BJ (cell line): ENCODE measurements at regions of chr6 and their contacts with region 1.

Region 1: DNA sequence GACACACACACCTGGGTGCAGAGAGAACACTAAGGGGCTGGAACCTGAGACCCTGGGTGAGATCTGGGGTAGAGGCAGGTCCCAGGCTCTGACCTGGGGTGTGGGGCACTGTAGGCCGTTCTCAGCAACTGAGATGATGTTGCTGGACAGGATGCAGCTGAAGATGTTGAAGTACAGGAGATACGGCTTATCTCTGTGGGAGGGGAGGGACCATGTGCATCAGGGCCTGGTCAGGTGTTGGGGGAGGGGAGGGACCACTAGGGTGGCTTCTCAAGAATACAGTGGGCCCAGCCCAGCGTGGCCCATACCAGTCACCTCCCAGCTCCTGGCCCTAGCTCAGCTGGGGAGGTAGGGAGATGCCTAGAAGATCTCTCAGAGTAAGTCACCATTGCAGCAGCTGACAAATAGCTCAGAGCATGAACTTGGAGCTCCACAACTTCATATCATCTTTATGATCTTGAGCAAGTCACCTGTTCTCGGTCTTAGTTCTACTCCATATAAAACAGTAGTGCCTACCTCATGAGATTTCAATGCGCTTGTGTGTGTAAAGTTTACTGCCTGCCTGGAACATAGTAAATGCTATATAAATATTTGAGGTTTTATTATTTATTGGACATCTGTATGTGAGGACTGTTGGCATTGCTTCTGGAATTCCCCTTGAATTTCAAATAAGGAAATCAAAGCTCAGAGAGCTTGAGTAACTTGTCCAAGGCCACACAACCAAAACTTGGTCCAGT is 3.8 kb downstream of the SLC44A4 start:
- DNase-seq: no peak
- H3K4me3 ChIP-seq: no peak overlapping the region
- H3K27me3 ChIP-seq: peaks cover 2% of the 10 kb centered on the region; the same call in 1 of the 2 replicates
- CTCF ChIP-seq: no peak

Region 2: DNA sequence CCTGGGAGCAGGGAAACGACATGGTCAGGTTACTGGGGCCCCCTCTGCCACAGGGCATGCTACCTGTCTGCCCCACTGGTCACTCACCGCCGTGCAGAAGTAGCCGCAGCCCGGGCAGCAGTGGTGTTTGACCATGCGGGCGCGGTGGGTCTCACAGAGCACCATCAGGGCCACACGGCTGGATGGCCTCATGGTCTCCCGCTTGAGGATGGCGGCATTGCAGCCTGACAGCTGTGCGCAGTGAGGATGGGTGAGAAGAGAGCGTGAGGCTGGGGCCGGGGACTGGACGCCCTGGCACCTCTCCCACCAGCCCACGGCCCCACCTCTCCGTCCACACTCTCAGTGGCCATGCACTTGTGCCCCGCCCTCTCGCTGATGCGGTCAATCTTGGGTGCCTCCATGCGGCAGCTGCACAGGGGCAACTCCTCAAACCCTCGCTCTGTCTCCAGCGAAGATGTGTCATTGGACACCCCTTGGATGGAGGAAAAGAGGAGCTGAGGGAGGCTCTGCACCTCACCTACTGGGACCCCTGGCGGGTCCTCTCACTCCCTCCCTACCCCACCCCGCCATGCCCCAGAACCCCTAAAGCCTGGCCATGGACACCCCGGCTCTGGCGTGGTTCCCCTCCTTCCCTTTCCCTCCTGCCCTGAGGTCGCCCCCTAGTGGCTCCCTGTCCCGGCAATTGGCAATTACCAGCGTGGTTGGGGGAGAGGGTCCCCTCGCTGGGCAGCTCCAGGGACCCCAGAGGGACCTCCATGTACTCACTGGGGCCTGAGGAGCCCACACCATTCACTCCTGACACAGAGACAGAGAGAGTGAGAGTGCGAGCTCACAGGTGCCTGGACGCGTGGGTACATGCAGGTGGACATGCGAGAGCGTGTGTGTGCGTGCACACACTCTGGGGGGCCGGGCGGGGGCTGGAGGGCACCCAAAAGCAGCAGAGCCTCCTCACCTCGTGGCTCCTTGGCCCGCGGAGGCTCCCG is 13.6 kb after region 1 on chr6:
- CTCF ChIA-PET with region 1: interaction called, 24 read pairs
- POLR2A ChIA-PET with region 1: no interaction called
- DNase-seq: no peak
- H3K4me3 ChIP-seq: no peak overlapping the region
- H3K27me3 ChIP-seq: no peaks in the 10 kb centered on the region
- CTCF ChIP-seq: peak; percentile 82